CD4-positive, alpha-beta memory T cell (primary cell): ENCODE measurements at regions of chr6 and their contacts with region 1.

Region 1: GRCh38 chr6:32984605-32985389 is 16.4 kb downstream of the BRD2 start:
- DNase-seq: peak; percentile 83 to 88 (median 84)
- H3K4me3 ChIP-seq: no peak overlapping the region
- H3K4me3 Mint-ChIP-seq: no peak overlapping the region
- H3K27ac ChIP-seq: no peak overlapping the region
- H3K27ac Mint-ChIP-seq: peak overlapping the region; percentile 3 to 82 (median 45)
- H3K4me1 ChIP-seq: peaks cover 9% of the 10 kb centered on the region
- H3K4me1 Mint-ChIP-seq: peaks cover 18 to 34% (median 21%) of the 10 kb centered on the region in 4 donors
- H3K27me3 ChIP-seq: no peaks in the 10 kb centered on the region
- H3K27me3 Mint-ChIP-seq: no peaks in the 10 kb centered on the region

Region 2: DNA sequence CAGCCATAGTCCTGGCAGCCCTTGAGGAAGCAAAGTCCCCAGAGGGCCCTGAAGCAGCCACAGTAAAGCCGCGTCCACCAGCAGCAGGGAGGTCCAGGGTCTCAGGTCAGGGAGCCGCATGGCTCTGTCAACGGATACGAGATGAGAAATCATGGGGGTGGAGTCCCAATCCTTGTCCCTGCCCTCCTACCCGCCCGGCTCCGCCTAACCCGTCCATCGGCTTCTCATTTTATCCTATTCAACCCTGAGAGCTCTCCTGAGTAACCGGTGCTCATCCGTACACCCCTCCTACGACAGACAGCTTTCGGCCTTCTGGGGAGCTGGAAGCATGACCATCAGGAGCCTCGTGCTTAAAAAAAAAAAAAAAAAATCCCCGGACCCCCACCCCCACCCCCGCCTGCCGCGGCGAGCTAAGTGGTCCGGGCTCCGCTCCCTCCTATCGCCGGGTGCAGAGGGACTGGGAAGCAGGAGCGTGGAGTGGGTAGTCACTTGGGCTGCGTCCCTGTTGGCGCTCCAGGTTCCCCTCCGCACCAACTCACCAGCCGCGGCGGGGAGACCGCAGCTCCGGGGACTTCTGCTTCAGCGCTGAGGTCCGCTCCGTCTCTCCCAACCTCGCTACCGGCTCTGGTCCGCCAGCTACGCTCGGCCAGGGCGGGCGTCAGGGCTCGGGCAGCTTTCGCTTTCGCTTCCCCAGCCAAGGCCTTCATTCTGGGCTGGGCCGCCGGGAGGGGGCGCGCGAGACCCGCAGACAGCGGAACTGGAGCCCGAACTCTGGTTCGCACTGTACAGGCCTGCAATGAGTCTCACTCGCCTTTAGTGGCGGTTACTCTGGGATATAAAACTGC is 146.5 kb before region 1 on chr6 and contains the start of gene TAP2:
- CTCF ChIA-PET with region 1: interaction called, 28 read pairs
- POLR2A ChIA-PET with region 1: interaction called, 549 read pairs
- intact Hi-C with region 1: no loop called
- DNase-seq: peak; percentile 95 to 99 (median 96)
- H3K4me3 ChIP-seq: peak within 1 kb of the TSS; percentile 58 to 74
- H3K4me3 Mint-ChIP-seq: peak within 1 kb of the TSS; percentile 91 to 97 (median 93)
- H3K27ac ChIP-seq: peak within 1 kb of the TSS; percentile 99
- H3K27ac Mint-ChIP-seq: peak within 1 kb of the TSS; percentile 93 to 100 (median 99)
- H3K4me1 ChIP-seq: peaks cover 83% of the 10 kb centered on the region
- H3K4me1 Mint-ChIP-seq: peaks cover 66 to 99% (median 78%) of the 10 kb centered on the region in 4 donors
- H3K27me3 ChIP-seq: no peaks in the 10 kb centered on the region
- H3K27me3 Mint-ChIP-seq: no peaks in the 10 kb centered on the region
- total RNA-seq, gene TAP2: 106 to 112 TPM

Region 3: GRCh38 chr6:32853541-32854375 is 131.0 kb before region 1 on chr6 and contains the starts of genes PSMB9 and TAP1:
- CTCF ChIA-PET with region 1: interaction called, 12 read pairs
- POLR2A ChIA-PET with region 1: interaction called, 8 read pairs
- intact Hi-C with region 1: no loop called
- DNase-seq: peak; percentile 94 to 98 (median 96)
- H3K4me3 ChIP-seq: peak within 1 kb of the TSS; percentile 93 to 98
- H3K4me3 Mint-ChIP-seq: peak within 1 kb of the TSS; percentile 98 to 100 (median 99)
- H3K27ac ChIP-seq: peak within 1 kb of the TSS; percentile 100
- H3K27ac Mint-ChIP-seq: peak within 1 kb of the TSS; percentile 99 to 100 (median 100)
- H3K4me1 ChIP-seq: peaks cover 76% of the 10 kb centered on the region
- H3K4me1 Mint-ChIP-seq: peaks cover 57 to 92% (median 66%) of the 10 kb centered on the region in 4 donors
- H3K27me3 ChIP-seq: no peaks in the 10 kb centered on the region
- H3K27me3 Mint-ChIP-seq: no peaks in the 10 kb centered on the region
- total RNA-seq, gene PSMB9: 141 to 144 TPM
- total RNA-seq, gene TAP1: 136 to 141 TPM

Region 4: GRCh38 chr6:32885698-32886286 is 99.0 kb before region 1 on chr6:
- CTCF ChIA-PET with region 1: interaction called, 120 read pairs
- POLR2A ChIA-PET with region 1: interaction called, 15 read pairs
- intact Hi-C with region 1: loop called (anchors 1 kb)
- DNase-seq: peak in 4 of 5 donors; percentile 64 to 75 (median 69)
- H3K4me3 ChIP-seq: no peak overlapping the region
- H3K4me3 Mint-ChIP-seq: no peak overlapping the region
- H3K27ac ChIP-seq: no peak overlapping the region
- H3K27ac Mint-ChIP-seq: no peak overlapping the region
- H3K4me1 ChIP-seq: no peaks in the 10 kb centered on the region
- H3K4me1 Mint-ChIP-seq: no peaks in the 10 kb centered on the region
- H3K27me3 ChIP-seq: no peaks in the 10 kb centered on the region
- H3K27me3 Mint-ChIP-seq: no peaks in the 10 kb centered on the region

Region 5: GRCh38 chr6:32933636-32934085 is 51.1 kb before region 1 on chr6:
- CTCF ChIA-PET with region 1: interaction called, 631 read pairs
- POLR2A ChIA-PET with region 1: interaction called, 698 read pairs
- intact Hi-C with region 1: loop called (anchors 1 kb)
- DNase-seq: peak; percentile 67 to 73 (median 70)
- H3K4me3 ChIP-seq: no peak overlapping the region
- H3K4me3 Mint-ChIP-seq: no peak overlapping the region
- H3K27ac ChIP-seq: no peak overlapping the region
- H3K27ac Mint-ChIP-seq: peak overlapping the region in 2 of 7 donors; percentile 4 to 26
- H3K4me1 ChIP-seq: peaks cover 5% of the 10 kb centered on the region
- H3K4me1 Mint-ChIP-seq: peaks cover 0 to 7% (median 5%) of the 10 kb centered on the region in 4 donors
- H3K27me3 ChIP-seq: no peaks in the 10 kb centered on the region
- H3K27me3 Mint-ChIP-seq: no peaks in the 10 kb centered on the region

Region 6: DNA sequence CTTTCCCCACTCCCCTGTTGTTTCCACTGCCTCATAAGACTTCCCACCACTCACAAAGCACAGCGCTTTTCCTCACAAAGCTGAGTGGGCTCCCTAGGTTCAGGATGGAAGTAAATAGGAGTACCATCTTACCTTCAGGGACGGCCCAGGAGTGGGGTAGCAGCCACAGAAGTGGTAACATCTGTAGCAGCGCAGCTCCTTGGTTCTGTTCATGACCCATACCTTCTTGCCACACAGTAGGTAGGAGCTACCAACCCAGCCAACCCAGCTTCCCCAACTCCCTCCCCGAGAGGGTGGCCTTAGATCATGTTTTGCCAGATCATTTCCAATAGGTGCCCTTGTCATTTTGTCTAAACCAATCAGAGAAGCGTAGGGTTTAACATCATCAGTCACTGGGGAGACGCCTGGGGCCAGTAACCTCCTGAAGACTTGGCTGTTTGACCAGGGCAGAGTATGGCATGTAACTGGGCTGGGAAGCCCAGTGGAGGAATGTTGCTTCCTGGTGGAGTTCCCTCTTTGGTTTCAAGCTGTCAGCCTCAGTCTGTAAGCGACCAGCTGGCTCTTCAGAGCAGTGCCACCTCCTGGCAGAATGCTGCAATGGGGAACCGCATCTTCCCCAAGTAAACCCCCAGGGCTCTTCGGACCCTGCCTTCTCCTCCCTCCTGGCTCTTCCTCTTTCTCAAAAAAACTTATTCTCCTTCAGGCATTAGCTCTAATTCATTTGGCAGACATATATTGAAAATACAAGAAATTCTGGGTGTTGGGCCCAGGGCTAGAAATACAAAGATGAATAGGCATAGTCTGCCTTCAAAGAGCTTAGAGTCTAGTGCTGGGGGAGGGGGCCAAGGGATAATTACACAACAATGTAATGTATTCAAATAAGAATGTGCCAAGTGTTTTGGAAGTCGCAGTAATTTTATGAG is 31.7 kb before region 1 on chr6 and contains the start of gene HLA-DMA:
- CTCF ChIA-PET with region 1: interaction called, 537 read pairs
- POLR2A ChIA-PET with region 1: interaction called, 607 read pairs
- intact Hi-C with region 1: loop called (anchors 1 kb)
- DNase-seq: peak; percentile 76 to 90 (median 85)
- H3K4me3 ChIP-seq: peak within 1 kb of the TSS; percentile 7 to 19
- H3K4me3 Mint-ChIP-seq: peak within 1 kb of the TSS; percentile 18 to 80 (median 68)
- H3K27ac ChIP-seq: peak within 1 kb of the TSS; percentile 31
- H3K27ac Mint-ChIP-seq: peak within 1 kb of the TSS; percentile 49 to 89 (median 82)
- H3K4me1 ChIP-seq: peaks cover 27% of the 10 kb centered on the region
- H3K4me1 Mint-ChIP-seq: peaks cover 24 to 44% (median 34%) of the 10 kb centered on the region in 4 donors
- H3K27me3 ChIP-seq: no peaks in the 10 kb centered on the region
- H3K27me3 Mint-ChIP-seq: no peaks in the 10 kb centered on the region
- total RNA-seq, gene HLA-DMA: 8.5 to 10.2 TPM

Region 7: GRCh38 chr6:32995448-32995847 is 10.7 kb after region 1 on chr6:
- CTCF ChIA-PET with region 1: interaction called, 10 read pairs
- POLR2A ChIA-PET with region 1: interaction called, 3 read pairs
- intact Hi-C with region 1: no loop called
- DNase-seq: no peak
- H3K4me3 ChIP-seq: no peak overlapping the region
- H3K4me3 Mint-ChIP-seq: no peak overlapping the region
- H3K27ac ChIP-seq: no peak overlapping the region
- H3K27ac Mint-ChIP-seq: no peak overlapping the region
- H3K4me1 ChIP-seq: no peaks in the 10 kb centered on the region
- H3K4me1 Mint-ChIP-seq: peaks cover 4 to 6% (median 5%) of the 10 kb centered on the region in 4 donors
- H3K27me3 ChIP-seq: no peaks in the 10 kb centered on the region
- H3K27me3 Mint-ChIP-seq: peaks cover 13 to 20% of the 10 kb centered on the region in 2 donors

Region 8: GRCh38 chr6:33126101-33126714 is 141.4 kb after region 1 on chr6:
- CTCF ChIA-PET with region 1: no interaction called
- POLR2A ChIA-PET with region 1: no interaction called
- intact Hi-C with region 1: no loop called
- DNase-seq: peak in 4 of 5 donors; percentile 26 to 41 (median 35)
- H3K4me3 ChIP-seq: no peak overlapping the region
- H3K4me3 Mint-ChIP-seq: no peak overlapping the region
- H3K27ac ChIP-seq: no peak overlapping the region
- H3K27ac Mint-ChIP-seq: no peak overlapping the region
- H3K4me1 ChIP-seq: no peaks in the 10 kb centered on the region
- H3K4me1 Mint-ChIP-seq: no peaks in the 10 kb centered on the region
- H3K27me3 ChIP-seq: no peaks in the 10 kb centered on the region
- H3K27me3 Mint-ChIP-seq: peaks cover 19 to 28% of the 10 kb centered on the region in 2 donors

Region 9: DNA sequence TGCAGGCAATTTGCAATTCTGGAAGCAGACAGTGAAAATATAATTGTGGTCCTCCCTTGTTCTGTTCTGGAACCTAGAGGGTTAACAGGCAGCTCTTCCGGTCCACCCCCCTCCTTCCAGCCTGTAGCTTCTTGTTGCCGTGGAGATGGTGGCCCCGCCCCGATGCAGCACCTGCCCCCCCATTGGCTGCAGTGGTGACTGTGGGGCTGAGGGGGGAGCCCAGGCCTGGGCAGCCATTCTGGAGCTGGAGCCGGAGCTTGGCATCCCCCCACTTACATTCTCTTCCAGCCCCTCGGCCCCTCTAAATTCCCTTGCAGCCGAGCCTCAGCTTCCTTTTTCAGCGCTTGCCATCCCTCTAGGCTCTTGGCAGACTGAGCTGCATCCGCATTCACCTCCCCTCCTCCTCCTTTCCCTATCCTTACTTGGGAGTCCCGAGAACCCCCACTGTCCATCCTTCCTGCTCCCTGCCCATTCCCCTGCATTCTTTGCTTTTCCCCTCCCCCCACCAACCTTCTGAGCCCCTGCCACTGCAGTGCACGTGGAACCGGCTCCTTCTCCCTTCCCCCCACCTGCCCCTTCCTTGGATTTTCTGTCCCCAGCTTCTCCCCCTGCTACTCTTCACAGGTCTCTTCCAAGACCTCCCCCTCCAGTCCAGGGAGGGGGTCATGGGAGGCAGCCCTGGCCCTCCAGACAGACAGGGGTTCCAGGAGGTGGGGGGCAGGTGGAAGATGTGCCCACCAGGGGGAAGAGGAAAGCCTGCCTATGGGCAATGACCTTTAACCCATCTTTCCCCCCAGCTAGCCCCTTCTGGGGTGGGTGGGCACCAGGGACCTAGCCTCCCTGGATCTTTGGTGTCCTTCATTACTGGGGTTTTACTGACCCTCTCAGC is 446.4 kb after region 1 on chr6:
- CTCF ChIA-PET with region 1: no interaction called
- POLR2A ChIA-PET with region 1: no interaction called
- intact Hi-C with region 1: no loop called
- DNase-seq: peak; percentile 82 to 91 (median 84)
- H3K4me3 ChIP-seq: peak overlapping the region; percentile 11 to 54
- H3K4me3 Mint-ChIP-seq: peak overlapping the region; percentile 71 to 94 (median 90)
- H3K27ac ChIP-seq: peak overlapping the region; percentile 76
- H3K27ac Mint-ChIP-seq: peak overlapping the region; percentile 94 to 99 (median 98)
- H3K4me1 ChIP-seq: peaks cover 53% of the 10 kb centered on the region
- H3K4me1 Mint-ChIP-seq: peaks cover 48 to 66% (median 60%) of the 10 kb centered on the region in 4 donors
- H3K27me3 ChIP-seq: no peaks in the 10 kb centered on the region
- H3K27me3 Mint-ChIP-seq: no peaks in the 10 kb centered on the region